ENCODE measurements at regions of chr12 and their contacts with region 1.

Region 1: GRCh38 chr12:133130038-133130807 is at the starts of genes ZNF10 and ZNF891:
- DNase-seq: peak; percentile 96 to 98
- ATAC-seq: peak; percentile 98 to 99 (median 98)
- H3K4me3 ChIP-seq: peak within 1 kb of the TSS; percentile 75
- H3K27ac ChIP-seq: peak within 1 kb of the TSS; percentile 94
- H3K4me1 ChIP-seq: peaks cover 7% of the 10 kb centered on the region
- H3K27me3 ChIP-seq: no peaks in the 10 kb centered on the region
- CTCF ChIP-seq: no peak
- total RNA-seq, gene ZNF10: 2.5 to 5.3 (median 3.3) TPM
- total RNA-seq, gene ZNF891: 0.69 to 1.1 (median 0.93) TPM

Region 2: DNA sequence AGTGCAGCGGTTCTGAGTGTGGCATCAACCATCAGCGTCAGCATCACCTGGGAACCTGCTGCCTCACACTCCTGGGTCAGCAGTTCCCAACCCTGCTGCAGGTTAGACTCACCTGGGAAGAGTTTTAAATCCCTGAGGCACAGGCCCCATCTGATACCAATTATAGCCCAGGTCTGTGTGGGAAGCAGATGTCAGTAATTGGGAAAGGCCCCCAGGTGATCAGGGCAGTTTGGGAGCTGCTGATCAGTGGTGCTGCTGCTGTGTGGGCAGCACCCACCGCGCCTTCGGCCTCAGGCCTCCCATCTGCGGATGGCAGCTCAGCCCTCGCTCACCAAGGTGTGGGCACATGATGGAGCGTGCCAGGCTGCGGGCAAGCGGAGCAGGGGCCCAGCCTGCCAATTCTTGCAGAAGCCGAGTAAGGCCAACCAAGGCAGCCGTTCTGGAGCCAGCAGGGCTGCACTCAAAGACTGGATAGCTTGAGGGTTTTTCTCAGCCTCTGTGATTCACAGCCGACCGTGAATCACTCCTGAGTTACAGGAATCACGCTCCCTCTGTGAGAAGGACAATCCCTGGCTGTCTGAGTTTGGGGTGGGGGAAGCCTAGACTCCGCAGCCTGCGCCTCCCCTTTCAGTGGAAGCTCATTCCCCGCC is 1574.9 kb before region 1 on chr12:
- intact Hi-C with region 1: no loop called
- DNase-seq: no peak
- ATAC-seq: no peak
- H3K4me3 ChIP-seq: no peak overlapping the region
- H3K27ac ChIP-seq: no peak overlapping the region
- H3K4me1 ChIP-seq: no peaks in the 10 kb centered on the region
- H3K27me3 ChIP-seq: peaks cover 0 to 8% (median 0%) of the 10 kb centered on the region in 3 donors
- CTCF ChIP-seq: no peak

Region 3: DNA sequence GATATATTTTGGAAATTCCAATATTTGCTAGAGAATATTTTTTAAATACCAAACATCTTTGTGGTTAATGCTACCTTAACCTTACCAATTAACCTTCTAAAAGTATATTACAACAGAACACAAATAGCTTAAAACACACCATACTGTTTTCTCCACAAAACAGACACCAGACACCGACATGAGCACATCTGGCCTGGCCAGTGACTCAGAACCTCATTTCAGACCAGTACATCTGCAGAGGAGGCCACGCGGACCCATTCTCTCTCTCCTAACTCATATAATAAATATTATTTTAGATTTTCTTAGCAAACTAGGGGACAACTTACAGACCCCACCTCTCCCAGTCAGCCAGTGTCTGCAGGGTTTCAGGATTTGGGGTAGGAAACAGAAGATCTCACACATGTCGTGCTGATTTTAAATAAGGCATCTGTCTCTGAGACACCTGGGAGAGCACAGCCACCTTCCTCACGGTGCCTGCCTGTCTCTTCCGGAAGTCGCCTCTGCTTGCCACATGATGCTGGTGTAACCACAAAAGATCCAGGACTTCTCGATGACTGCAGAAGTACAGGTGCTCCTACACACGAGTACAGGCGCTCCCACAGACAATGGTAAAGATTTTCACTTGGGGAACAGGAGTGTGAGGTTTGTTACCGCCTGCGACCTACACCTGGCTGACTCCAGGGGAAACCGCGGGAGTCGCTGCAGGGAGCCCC is 358.9 kb before region 1 on chr12:
- intact Hi-C with region 1: loop called in 1 of 2 experiments (anchors 5 kb)
- DNase-seq: no peak
- ATAC-seq: no peak
- H3K4me3 ChIP-seq: no peak overlapping the region
- H3K27ac ChIP-seq: no peak overlapping the region
- H3K4me1 ChIP-seq: peaks cover 14% of the 10 kb centered on the region
- H3K27me3 ChIP-seq: no peaks in the 10 kb centered on the region
- CTCF ChIP-seq: no peak

Region 4: GRCh38 chr12:132956011-132956788 is 174.0 kb before region 1 on chr12 and contains the start of gene ZNF605:
- intact Hi-C with region 1: loop called in 1 of 2 experiments (anchors 5 kb)
- DNase-seq: peak; percentile 91 to 95
- ATAC-seq: peak; percentile 94 to 97 (median 96)
- H3K4me3 ChIP-seq: peak within 1 kb of the TSS; percentile 81
- H3K27ac ChIP-seq: peak within 1 kb of the TSS; percentile 88
- H3K4me1 ChIP-seq: peaks cover 3% of the 10 kb centered on the region
- H3K27me3 ChIP-seq: no peaks in the 10 kb centered on the region
- CTCF ChIP-seq: no peak
- total RNA-seq, gene ZNF605: 6.6 to 8.8 (median 7.8) TPM

Region 5: DNA sequence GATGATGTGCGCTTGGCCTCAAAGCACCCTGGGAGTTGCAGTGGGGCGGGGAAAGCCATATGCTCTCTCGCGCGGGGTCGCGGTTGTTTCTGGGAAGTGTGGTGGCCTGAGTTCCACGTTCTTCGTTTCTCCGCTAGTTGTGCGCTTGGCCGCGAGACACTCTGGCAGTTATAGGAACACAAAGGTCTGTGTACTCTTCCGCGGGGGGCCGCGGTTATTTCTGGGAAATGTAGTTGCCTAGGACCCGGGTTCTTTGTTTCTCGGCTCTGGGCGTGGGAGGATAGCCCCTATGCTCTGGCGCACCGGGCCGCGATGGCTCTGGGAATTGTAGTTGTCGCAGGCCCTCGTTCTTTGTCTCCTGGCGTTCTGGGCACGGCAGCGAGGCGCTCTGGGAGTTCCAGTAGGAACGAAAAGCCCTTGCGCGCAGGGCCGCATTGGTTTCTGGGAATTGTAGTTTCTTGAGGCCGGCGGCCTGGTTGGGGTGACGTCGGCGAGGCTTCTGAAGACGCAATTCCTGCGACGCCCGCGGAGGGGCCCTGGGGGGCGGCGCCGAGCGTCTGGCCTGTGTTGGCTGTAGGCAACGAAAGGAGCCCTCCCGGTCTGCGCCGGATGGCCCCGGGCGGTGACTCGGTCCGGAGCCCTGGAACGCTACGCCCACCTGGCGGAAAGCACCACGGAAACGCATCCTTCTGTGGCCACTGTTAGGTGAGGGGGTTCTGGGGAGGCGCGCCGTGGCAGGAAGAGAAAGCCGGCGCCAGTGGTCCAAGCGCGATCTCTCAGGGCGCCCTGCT is 49.7 kb before region 1 on chr12 and contains the start of gene ZNF140:
- intact Hi-C with region 1: loop called (anchors 2 to 5 kb)
- DNase-seq: peak; percentile 95 to 98
- ATAC-seq: peak; percentile 85 to 91 (median 86)
- H3K4me3 ChIP-seq: peak within 1 kb of the TSS; percentile 99
- H3K27ac ChIP-seq: peak within 1 kb of the TSS; percentile 99
- H3K4me1 ChIP-seq: peaks cover 3% of the 10 kb centered on the region
- H3K27me3 ChIP-seq: no peaks in the 10 kb centered on the region
- CTCF ChIP-seq: peak; percentile 31
- total RNA-seq, gene ZNF140: 3.9 to 9.8 (median 7.5) TPM

Region 6: GRCh38 chr12:133190176-133190575 is 60.0 kb after region 1 on chr12:
- intact Hi-C with region 1: no loop called
- DNase-seq: no peak
- ATAC-seq: no peak
- H3K4me3 ChIP-seq: no peak overlapping the region
- H3K27ac ChIP-seq: no peak overlapping the region
- H3K4me1 ChIP-seq: no peaks in the 10 kb centered on the region
- H3K27me3 ChIP-seq: no peaks in the 10 kb centered on the region
- CTCF ChIP-seq: no peak